Activated naive CD8-positive, alpha-beta T cell treated with anti-CD3 and anti-CD28 coated beads, Interleukin-2, amount 10 ng/mL, durations not matched to agents 7 days and 5 days (primary cell): ENCODE measurements at regions of chr5 and their contacts with region 1.

Region 1: GRCh38 chr5:179559284-179560252 is 9.2 kb downstream of the RUFY1 start:
- DNase-seq: peak; percentile 81
- ATAC-seq: peak; percentile 100
- H3K4me3 Mint-ChIP-seq: peak overlapping the region; percentile 85
- H3K27ac Mint-ChIP-seq: peak overlapping the region; percentile 78
- H3K4me1 Mint-ChIP-seq: peaks cover 9% of the 10 kb centered on the region
- H3K27me3 Mint-ChIP-seq: no peaks in the 10 kb centered on the region

Region 2: DNA sequence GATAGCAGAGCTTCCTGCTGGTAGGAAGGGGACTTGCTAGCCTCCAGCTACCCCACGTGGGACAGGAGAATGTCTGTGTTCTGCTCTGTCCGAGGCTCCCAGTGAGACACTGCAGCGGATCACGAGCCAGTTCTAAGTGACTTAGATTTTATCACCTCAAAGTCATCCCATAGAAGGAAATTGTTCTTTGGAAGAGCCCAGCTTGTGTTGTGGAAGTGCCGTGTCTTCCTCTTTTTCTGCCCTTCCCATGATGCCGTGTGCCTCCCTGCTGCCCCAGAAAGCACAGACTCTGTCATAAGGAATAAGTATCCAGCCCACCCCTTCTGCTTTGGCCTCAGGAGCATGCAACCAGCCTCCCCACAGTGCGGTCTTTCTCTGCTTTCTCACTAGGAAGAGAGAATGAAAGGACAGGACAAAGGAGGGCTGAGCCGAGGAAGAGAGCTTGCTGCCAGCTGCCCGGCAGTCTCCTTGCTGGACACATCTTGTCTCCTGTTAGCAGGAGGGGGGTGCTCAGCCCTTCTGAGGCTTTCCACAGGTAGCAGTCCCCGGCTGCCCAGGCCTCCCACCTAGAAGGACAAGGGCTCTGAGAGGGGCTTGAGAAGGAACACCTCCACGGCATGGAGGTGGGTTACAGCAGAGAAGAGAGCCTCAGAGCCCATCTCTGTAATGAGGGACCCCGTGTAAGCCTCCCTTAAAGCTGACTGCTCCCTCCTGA is 26.5 kb after region 1 on chr5:
- POLR2A ChIA-PET with region 1: no interaction called
- DNase-seq: no peak
- ATAC-seq: no peak
- H3K4me3 Mint-ChIP-seq: no peak overlapping the region
- H3K27ac Mint-ChIP-seq: no peak overlapping the region
- H3K4me1 Mint-ChIP-seq: no peaks in the 10 kb centered on the region
- H3K27me3 Mint-ChIP-seq: no peaks in the 10 kb centered on the region

Region 3: DNA sequence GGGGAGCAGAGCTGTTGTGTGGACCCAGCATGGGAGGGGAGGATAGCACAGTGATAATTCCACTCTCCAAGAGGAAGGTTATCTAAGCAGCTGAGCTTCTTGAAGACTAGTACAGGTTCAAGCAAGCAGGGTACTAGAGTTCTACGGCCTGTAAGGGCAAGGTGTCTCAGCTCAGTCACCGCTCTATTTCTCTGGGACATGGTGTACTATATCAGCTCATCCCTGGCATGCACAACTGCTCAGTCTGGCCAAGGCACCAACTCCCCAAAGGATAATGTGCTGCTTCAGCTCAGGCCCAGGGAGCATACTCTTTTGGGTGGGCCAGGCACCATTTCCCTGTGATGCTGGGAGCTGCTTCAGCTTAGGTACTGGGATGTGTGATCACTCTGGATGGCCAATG is 442.2 kb after region 1 on chr5:
- POLR2A ChIA-PET with region 1: interaction called, 10 read pairs
- DNase-seq: no peak
- ATAC-seq: no peak
- H3K4me3 Mint-ChIP-seq: no peak overlapping the region
- H3K27ac Mint-ChIP-seq: no peak overlapping the region
- H3K4me1 Mint-ChIP-seq: peaks cover 9% of the 10 kb centered on the region
- H3K27me3 Mint-ChIP-seq: peaks cover 2% of the 10 kb centered on the region